ENCODE measurements at regions of chr11 and their contacts with region 1.

Region 1: GRCh38 chr11:7982582-7983119 is 4.5 kb upstream of the EIF3F start:
- DNase-seq: no peak
- H3K4me3 ChIP-seq: no peak overlapping the region
- H3K27ac ChIP-seq: no peak overlapping the region
- H3K4me1 ChIP-seq: peaks cover 0 to 8% (median 0%) of the 10 kb centered on the region in 3 donors
- H3K27me3 ChIP-seq: no peaks in the 10 kb centered on the region
- CTCF ChIP-seq: no peak
- POLR2A ChIP-seq: no peak

Region 2: GRCh38 chr11:7892840-7893254 is 89.8 kb before region 1 on chr11:
- intact Hi-C with region 1: loop called (anchors 5 kb)
- DNase-seq: no peak
- H3K4me3 ChIP-seq: no peak overlapping the region
- H3K27ac ChIP-seq: no peak overlapping the region
- H3K4me1 ChIP-seq: no peaks in the 10 kb centered on the region
- H3K27me3 ChIP-seq: no peaks in the 10 kb centered on the region
- CTCF ChIP-seq: peak in 5 of 6 experiments; percentile 53 to 79 (median 64)
- POLR2A ChIP-seq: no peak

Measured in esophagus squamous epithelium (tissue), 5 donors.